ENCODE measurements at regions of chr11 and their contacts with region 1.

Region 1: DNA sequence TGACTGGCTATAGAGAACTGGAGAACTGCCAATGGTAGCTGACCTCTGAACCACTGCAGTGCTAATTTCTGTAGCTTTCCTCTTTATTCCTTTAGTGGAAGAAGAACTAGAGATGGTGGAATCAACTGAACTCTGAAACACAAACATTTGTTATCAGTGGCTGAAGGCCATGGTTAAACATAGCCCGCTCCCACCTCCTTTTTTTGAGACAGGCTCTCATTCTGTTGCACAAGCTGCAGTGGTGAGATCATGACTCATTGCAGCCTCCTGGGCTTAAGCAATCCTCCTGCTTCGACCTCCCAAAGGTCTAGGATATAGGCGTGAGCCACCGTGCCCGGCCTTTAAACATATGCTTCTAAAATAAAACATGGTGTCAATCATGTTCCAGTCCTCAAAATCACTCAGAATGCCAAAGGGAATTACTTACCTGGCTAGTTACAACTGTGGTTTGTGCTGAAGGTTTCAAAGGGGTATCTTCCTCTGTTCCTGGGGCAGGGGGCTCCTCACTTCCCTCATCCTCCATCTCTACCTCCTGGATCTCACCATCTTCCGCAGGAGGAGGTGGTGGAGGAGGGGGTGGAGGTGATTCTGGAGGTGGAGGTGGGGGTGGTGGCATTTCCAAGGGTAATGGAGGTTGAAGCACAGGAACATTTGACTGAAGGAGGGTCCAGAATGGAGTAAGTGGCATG is 9.0 kb upstream of the AGBL2 start:
- DNase-seq: no peak
- H3K4me3 ChIP-seq: no peak overlapping the region
- H3K27ac ChIP-seq: peak overlapping the region in 11 of 59 donors; percentile 12 to 69 (median 37)
- H3K27me3 ChIP-seq: no peaks in the 10 kb centered on the region
- CTCF ChIP-seq: no peak

Region 2: DNA sequence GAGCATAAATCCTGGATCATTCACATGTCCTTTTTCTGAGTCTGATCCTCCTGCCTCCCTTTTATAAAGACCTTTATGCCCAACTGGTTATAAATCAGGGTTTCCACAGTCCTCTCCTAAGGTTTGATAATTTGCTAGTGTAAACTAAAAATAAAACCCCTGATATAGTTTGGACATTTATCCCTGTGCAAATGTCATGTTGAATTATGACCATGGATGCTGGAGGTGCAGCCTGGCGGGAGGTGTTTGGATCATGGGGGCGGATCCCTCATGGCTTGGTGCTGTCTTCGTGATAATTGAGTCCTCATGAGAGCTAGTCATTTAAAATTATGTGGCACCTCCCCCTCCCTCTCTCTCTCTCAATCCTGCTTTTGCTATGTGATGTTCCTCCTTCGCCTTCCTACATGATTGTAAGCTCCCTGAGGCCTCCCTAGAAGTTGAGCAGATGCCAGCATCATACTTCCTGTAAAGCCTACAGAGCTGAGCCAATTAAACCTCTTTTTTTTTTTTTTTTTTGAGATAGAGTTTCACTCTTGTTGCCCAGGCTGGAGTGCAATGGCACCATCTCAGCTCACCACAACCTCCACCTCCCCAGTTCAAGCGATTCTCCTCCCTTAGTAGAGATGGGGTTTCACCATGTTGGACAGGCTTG is 72.2 kb before region 1 on chr11:
- intact Hi-C with region 1: loop called in 1 of 2 experiments (anchors 5 kb)
- DNase-seq: no peak
- H3K4me3 ChIP-seq: no peak overlapping the region
- H3K27ac ChIP-seq: no peak overlapping the region
- H3K27me3 ChIP-seq: no peaks in the 10 kb centered on the region
- CTCF ChIP-seq: no peak

Region 3: GRCh38 chr11:47705721-47706120 is 18.5 kb before region 1 on chr11:
- intact Hi-C with region 1: no loop called
- DNase-seq: no peak
- H3K4me3 ChIP-seq: no peak overlapping the region
- H3K27ac ChIP-seq: no peak overlapping the region
- H3K27me3 ChIP-seq: no peaks in the 10 kb centered on the region
- CTCF ChIP-seq: no peak

Measured in dorsolateral prefrontal cortex (tissue), 120 donors.